ENCODE measurements at regions of chr18 and their contacts with region 1.

Region 1: DNA sequence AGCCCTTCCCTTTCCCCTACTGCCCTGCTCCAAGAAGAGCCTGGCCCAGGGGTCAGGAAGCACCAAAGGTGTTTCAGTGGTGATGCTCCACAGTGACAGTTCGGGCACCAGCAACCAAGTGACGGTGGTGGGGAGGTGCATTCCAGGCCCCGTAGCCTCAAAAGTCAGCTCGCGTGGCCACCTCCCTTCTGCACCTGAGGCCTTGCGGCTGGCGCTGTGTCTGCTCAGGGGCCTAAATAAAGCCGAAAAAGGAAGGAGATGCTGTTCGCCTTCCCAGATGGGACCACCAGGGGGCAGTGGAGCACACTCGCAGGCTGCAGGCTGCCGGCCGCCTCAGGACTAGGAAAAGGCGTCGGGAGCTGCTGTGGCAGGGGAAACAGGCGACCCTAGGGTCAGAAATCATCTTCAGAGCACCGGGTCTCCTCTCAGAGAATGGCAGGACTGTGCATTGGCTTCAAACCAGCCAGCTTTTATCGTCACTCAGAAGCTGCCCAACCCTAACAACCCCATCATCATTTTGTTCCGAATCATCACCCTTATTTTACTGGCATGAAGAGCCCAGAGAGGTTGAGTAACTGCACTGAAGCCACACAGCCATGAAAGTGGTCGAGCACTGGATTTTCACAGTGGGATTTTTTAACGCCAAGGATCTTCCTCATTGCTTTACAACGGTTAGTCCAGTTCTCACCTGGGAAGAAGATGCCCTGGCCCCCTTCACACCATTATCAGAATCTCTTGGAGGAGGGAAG is 213.0 kb upstream of the CELF4 start:
- DNase-seq: peak; percentile 13
- H3K4me3 Mint-ChIP-seq: no peak overlapping the region
- H3K27ac Mint-ChIP-seq: no peak overlapping the region
- H3K4me1 Mint-ChIP-seq: no peaks in the 10 kb centered on the region
- H3K27me3 Mint-ChIP-seq: no peaks in the 10 kb centered on the region

Region 2: GRCh38 chr18:39571511-39571910 is 1792.9 kb after region 1 on chr18:
- intact Hi-C with region 1: loop called (anchors 5 kb)
- DNase-seq: no peak
- H3K4me3 Mint-ChIP-seq: no peak overlapping the region
- H3K27ac Mint-ChIP-seq: no peak overlapping the region
- H3K4me1 Mint-ChIP-seq: no peaks in the 10 kb centered on the region
- H3K27me3 Mint-ChIP-seq: no peaks in the 10 kb centered on the region

Measured in activated T-helper 1 cell treated with anti-CD3 and anti-CD28 coated beads, Interleukin-12 subunit alpha, Interleukin-12 subunit beta, Interleukin-2, Interleukin-4 antibody, amounts not matched to agents 30 ng/mL and 10 ng/mL and 1 ng/mL, durations not matched to agents 14 hours and 24 hours and 36 hours (primary cell).